Gastrocnemius medialis (tissue), 4 donors: ENCODE measurements at regions of chr5 and their contacts with region 1.

Region 1: DNA sequence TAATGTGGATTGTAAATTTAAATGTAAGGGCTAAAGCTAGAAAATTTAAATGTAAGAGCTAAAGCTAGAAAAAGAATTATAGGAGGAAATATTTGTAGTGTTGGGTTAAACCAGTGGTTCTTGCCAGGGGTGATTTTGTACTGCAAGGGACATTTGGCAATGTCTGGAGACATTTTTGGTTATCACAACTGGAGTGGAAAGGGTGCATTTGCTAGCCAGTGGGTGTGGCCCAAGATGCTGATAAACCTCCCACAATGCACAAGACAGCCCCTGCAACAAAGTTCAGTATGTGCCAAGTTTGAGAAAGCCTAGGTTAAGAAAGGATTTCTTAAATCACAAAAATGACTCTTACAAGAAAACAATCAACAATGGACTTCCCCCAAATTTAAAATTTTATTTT is 31.6 kb upstream of the ELL2 start:
- DNase-seq: no peak
- ATAC-seq: no peak
- H3K4me3 ChIP-seq: no peak overlapping the region
- H3K27ac ChIP-seq: no peak overlapping the region
- H3K4me1 ChIP-seq: no peaks in the 10 kb centered on the region
- H3K27me3 ChIP-seq: no peaks in the 10 kb centered on the region
- CTCF ChIP-seq: no peak
- POLR2A ChIP-seq: no peak

Region 2: DNA sequence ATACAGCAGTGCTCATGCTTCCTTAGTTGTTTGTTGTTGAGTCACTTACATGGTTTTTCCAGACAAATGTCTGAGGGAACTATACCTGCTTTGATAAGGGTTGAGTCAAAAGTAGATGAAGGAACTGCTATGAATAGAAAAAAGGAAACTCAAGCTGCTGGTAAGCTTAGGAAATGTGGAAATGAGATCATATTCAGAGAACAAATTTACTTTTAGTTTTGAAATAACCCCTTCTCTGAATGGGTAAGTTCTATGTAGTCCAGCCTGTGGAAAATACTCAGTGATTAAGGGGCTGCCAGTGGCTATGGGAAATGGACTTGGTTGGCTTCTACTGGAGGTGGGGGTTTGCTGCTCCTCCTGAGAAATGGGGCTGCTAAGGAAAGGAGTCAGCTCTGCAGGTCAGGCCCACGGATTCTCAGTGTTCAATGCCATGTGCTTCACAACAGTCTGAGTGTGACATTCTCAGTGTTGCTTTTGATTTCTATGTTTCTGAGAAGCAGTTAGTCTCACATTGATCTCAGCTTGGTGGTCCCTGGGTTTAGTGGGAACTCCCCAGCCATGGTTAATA is 123.1 kb before region 1 on chr5:
- in situ Hi-C with region 1: no loop called
- intact Hi-C with region 1: no loop called
- DNase-seq: no peak
- ATAC-seq: peak; percentile 57 to 67
- H3K4me3 ChIP-seq: no peak overlapping the region
- H3K27ac ChIP-seq: peak overlapping the region; percentile 46 to 77 (median 72)
- H3K4me1 ChIP-seq: peaks cover 17 to 18% of the 10 kb centered on the region in 2 donors
- H3K27me3 ChIP-seq: no peaks in the 10 kb centered on the region
- CTCF ChIP-seq: no peak
- POLR2A ChIP-seq: peak in 1 of 2 donors; percentile 27

Region 3: GRCh38 chr5:96017951-96018350 is 24.7 kb after region 1 on chr5:
- in situ Hi-C with region 1: no loop called
- intact Hi-C with region 1: loop called (anchors 2 kb)
- DNase-seq: no peak
- ATAC-seq: no peak
- H3K4me3 ChIP-seq: no peak overlapping the region
- H3K27ac ChIP-seq: no peak overlapping the region
- H3K4me1 ChIP-seq: no peaks in the 10 kb centered on the region
- H3K27me3 ChIP-seq: no peaks in the 10 kb centered on the region
- CTCF ChIP-seq: no peak
- POLR2A ChIP-seq: no peak